Caco-2 (cell line): ENCODE measurements at regions of chr10 and their contacts with region 1.

Region 1: GRCh38 chr10:68720793-68721672 is at the start of gene CCAR1:
- DNase-seq: peak; percentile 100
- H3K4me3 ChIP-seq: peak within 1 kb of the TSS; percentile 89
- H3K4me3 Mint-ChIP-seq: peak within 1 kb of the TSS; percentile 86
- H3K27ac Mint-ChIP-seq: peak within 1 kb of the TSS; percentile 99
- H3K4me1 ChIP-seq: peaks cover 7% of the 10 kb centered on the region
- H3K4me1 Mint-ChIP-seq: peaks cover 9% of the 10 kb centered on the region
- H3K27me3 ChIP-seq: no peaks in the 10 kb centered on the region
- H3K27me3 Mint-ChIP-seq: no peaks in the 10 kb centered on the region
- CTCF ChIP-seq: no peak
- total RNA-seq, gene CCAR1: 180 and 189 TPM in 2 replicates

Region 2: DNA sequence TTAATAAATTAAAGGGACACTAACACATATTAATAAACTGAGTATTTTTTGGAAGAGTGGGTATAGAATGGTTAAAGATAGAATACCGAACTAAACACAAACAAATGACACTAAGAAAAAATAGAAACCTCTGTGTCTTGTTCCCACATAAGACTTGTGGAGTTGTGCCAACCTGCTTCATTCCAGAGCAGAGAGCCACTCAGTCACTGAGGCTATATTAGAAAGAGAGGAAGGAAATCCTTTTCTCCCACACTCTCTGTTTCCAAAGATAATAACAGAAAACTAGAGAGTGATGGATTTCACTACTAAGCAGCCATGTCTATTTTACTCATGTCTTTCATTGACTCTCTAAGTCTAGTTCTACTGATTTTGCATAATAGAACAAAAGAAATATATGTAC is 1051.1 kb before region 1 on chr10:
- CTCF ChIA-PET with region 1: no interaction called
- POLR2A ChIA-PET with region 1: no interaction called
- intact Hi-C with region 1: no loop called
- DNase-seq: no peak
- H3K4me3 ChIP-seq: no peak overlapping the region
- H3K4me3 Mint-ChIP-seq: no peak overlapping the region
- H3K27ac Mint-ChIP-seq: no peak overlapping the region
- H3K4me1 ChIP-seq: no peaks in the 10 kb centered on the region
- H3K4me1 Mint-ChIP-seq: no peaks in the 10 kb centered on the region
- H3K27me3 ChIP-seq: no peaks in the 10 kb centered on the region
- H3K27me3 Mint-ChIP-seq: peaks cover 13% of the 10 kb centered on the region
- CTCF ChIP-seq: no peak

Region 3: GRCh38 chr10:68397005-68397404 is 324.0 kb before region 1 on chr10:
- CTCF ChIA-PET with region 1: no interaction called
- POLR2A ChIA-PET with region 1: no interaction called
- intact Hi-C with region 1: no loop called
- DNase-seq: no peak
- H3K4me3 ChIP-seq: no peak overlapping the region
- H3K4me3 Mint-ChIP-seq: no peak overlapping the region
- H3K27ac Mint-ChIP-seq: no peak overlapping the region
- H3K4me1 ChIP-seq: no peaks in the 10 kb centered on the region
- H3K4me1 Mint-ChIP-seq: no peaks in the 10 kb centered on the region
- H3K27me3 ChIP-seq: no peaks in the 10 kb centered on the region
- H3K27me3 Mint-ChIP-seq: no peaks in the 10 kb centered on the region
- CTCF ChIP-seq: no peak

Region 4: GRCh38 chr10:68471586-68472408 is 249.2 kb before region 1 on chr10 and contains the start of gene DNA2:
- CTCF ChIA-PET with region 1: no interaction called
- POLR2A ChIA-PET with region 1: no interaction called
- intact Hi-C with region 1: loop called (anchors 2 kb)
- DNase-seq: peak; percentile 96 to 97
- H3K4me3 ChIP-seq: peak within 1 kb of the TSS; percentile 79
- H3K4me3 Mint-ChIP-seq: peak within 1 kb of the TSS; percentile 93
- H3K27ac Mint-ChIP-seq: peak within 1 kb of the TSS; percentile 98
- H3K4me1 ChIP-seq: peaks cover 13% of the 10 kb centered on the region
- H3K4me1 Mint-ChIP-seq: peaks cover 23% of the 10 kb centered on the region
- H3K27me3 ChIP-seq: no peaks in the 10 kb centered on the region
- H3K27me3 Mint-ChIP-seq: no peaks in the 10 kb centered on the region
- CTCF ChIP-seq: no peak
- total RNA-seq, gene DNA2: 85.5 and 88.1 TPM in 2 replicates

Region 5: DNA sequence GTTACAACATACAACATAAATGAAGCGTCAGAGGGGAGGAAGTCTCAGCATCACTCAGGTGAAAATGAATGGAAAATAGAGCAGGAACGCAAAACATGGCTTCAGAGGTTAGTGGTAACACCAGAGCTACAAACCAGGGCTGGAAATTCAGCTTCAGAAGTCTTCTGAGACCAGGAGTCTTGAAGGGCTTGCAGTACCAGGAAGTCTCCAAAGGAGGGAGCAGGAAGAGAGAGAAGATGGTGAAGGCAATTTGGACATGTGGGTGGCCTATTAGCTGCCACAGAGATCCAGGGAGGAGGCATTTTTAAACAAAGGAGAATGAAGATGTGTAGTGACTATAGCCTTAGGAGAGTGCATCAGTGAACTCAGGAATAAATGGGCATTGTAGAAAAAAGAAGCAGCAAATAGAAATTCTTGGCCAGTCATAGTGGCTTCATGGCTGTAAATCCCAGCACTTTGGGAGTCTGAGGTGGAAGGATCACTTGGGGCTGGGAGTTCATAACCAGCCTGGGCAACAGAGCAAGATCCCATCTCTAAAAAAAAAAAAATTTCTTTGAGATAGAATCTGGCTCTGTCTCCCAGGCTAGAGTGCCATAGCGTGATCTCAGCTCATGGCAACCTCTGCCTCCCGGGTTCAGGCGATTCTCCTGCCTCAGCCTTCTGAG is 170.2 kb before region 1 on chr10:
- CTCF ChIA-PET with region 1: interaction called, 12 read pairs
- POLR2A ChIA-PET with region 1: no interaction called
- intact Hi-C with region 1: loop called (anchors 2 kb)
- DNase-seq: peak; percentile 84
- H3K4me3 ChIP-seq: no peak overlapping the region
- H3K4me3 Mint-ChIP-seq: no peak overlapping the region
- H3K27ac Mint-ChIP-seq: no peak overlapping the region
- H3K4me1 ChIP-seq: peaks cover 18% of the 10 kb centered on the region; the same call in 1 of the 2 replicates
- H3K4me1 Mint-ChIP-seq: peaks cover 14% of the 10 kb centered on the region
- H3K27me3 ChIP-seq: no peaks in the 10 kb centered on the region
- H3K27me3 Mint-ChIP-seq: no peaks in the 10 kb centered on the region
- CTCF ChIP-seq: peak; percentile 92 to 97

Region 6: DNA sequence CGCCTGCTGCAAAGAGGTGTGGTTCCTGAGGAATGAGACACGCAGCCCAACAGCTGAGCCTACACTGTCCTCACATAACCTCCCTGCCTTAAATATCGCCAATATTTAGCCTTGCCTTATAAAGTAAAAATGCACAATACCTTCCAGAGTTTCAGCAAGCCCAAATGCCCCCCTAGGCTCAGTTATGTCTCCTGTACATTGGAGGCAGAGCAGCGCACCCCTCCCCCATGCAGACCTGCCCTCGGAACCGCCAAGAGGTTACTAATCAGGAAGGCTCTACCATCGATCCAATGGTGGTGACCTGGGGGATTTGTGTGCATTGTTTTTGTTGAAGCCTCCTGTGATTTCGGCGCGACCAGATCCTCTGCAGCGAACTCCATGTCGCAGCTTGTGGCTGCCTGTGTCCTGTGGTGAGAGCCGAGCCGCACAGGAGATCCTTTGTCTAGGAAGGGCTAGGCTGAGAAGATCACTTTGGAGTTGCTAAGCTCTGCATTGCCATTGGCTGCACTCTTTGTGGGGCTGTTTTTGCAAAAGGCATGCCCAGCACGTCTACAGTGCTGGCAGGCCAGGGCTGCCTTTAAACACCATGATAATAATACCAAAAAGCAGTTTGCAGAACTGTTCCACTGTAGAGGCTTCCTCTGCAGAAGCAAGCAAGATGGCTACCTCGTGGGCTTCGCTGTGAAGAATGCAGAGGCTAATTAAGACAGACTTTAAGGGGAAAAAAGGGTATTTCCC is 120.8 kb before region 1 on chr10:
- CTCF ChIA-PET with region 1: no interaction called
- POLR2A ChIA-PET with region 1: interaction called, 4 read pairs
- intact Hi-C with region 1: loop called (anchors 1 kb)
- DNase-seq: peak; percentile 85
- H3K4me3 ChIP-seq: peak overlapping the region; percentile 45
- H3K4me3 Mint-ChIP-seq: peak overlapping the region; percentile 82
- H3K27ac Mint-ChIP-seq: peak overlapping the region; percentile 90
- H3K4me1 ChIP-seq: peaks cover 41% of the 10 kb centered on the region
- H3K4me1 Mint-ChIP-seq: peaks cover 35% of the 10 kb centered on the region
- H3K27me3 ChIP-seq: no peaks in the 10 kb centered on the region
- H3K27me3 Mint-ChIP-seq: no peaks in the 10 kb centered on the region
- CTCF ChIP-seq: no peak

Region 7: DNA sequence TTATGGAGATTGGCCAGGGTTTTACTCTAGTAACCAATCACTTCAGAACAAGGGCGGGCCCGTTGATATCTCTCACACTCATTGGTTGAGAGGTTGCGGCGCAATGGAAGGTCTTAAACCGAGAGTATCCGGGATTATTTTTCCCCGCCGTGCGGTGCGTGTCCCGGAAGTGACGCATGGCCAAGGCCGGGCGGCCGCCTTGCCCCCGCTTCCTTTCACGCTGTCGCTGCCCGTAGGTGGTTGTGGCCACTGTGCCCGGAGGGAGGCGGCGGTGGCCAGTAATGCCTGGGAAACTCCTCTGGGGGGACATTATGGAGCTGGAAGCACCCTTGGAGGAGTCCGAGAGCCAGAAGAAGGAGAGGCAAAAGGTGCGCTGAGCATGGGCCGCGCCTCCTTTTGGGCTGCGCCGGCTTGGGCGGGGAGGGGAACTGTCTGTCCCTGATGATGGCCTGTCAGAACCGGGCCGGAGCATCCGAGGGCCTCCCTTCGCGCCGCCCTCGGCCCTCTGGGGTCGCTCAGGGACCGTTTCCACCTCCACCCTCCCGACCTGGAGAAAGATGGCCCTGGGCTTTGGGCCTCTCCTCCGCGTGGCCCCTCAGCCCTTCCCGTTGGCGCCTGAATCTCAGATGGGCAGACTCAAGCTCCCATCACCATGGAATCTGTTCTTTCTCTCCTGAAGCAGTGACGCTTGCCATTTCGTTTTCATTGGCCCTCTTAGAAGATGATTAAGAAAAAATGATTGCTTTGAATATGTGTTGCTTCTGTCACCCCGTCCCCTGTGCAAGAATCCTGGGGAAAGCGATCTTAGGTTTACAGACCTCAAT is 180.3 kb after region 1 on chr10 and contains the start of gene DDX50:
- CTCF ChIA-PET with region 1: no interaction called
- POLR2A ChIA-PET with region 1: interaction called, 4 read pairs
- intact Hi-C with region 1: loop called (anchors 1 kb)
- DNase-seq: peak; percentile 100
- H3K4me3 ChIP-seq: peak within 1 kb of the TSS; percentile 67
- H3K4me3 Mint-ChIP-seq: peak within 1 kb of the TSS; percentile 96
- H3K27ac Mint-ChIP-seq: peak within 1 kb of the TSS; percentile 99
- H3K4me1 ChIP-seq: peaks cover 12% of the 10 kb centered on the region
- H3K4me1 Mint-ChIP-seq: peaks cover 40% of the 10 kb centered on the region
- H3K27me3 ChIP-seq: no peaks in the 10 kb centered on the region
- H3K27me3 Mint-ChIP-seq: no peaks in the 10 kb centered on the region
- CTCF ChIP-seq: peak; percentile 51 to 52
- total RNA-seq, gene DDX50: 76.7 and 81.4 TPM in 2 replicates